GM12878 (cell line): ENCODE measurements at regions of chr6 and their contacts with region 1.

Region 1: DNA sequence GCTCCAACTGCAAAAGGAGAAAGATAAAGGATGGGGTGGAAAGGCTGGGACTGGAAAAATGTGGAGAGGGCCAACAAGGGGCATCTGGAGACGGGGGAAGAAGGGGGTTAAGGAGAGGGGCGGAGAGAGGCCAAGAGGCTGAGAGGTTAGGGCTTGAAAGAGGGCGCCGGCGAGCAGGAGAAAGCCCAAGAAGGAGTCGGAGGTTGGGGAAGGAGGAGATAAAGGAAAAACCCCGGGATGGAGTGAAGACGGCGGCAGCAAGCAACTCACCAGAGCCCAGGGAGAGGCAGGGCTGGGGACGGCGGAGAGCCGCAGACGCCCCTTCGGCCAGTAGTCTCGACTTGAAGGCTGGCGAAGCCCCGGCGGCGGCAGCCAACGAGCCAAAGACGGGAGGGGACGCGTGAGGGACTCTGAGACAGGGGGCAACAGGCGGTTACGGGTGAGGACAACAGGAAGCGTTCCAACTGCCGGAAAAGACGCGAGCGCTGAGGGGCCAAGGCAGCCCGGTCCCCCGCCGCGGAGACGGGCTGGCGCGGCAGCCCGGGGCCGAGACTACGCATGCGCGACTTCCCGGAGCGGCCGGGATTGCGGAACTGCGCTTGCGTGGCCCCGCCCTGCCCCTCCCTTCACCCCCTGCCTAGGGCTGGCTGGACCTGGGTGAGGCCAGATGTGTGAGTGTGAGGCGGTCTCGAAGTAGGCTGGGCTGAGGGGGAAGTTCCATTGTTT is at the start of gene STK38:
- DNase-seq: peak; percentile 71
- ATAC-seq: peak; percentile 94
- H3K4me3 ChIP-seq: peak within 1 kb of the TSS; percentile 97
- H3K27ac ChIP-seq: peak within 1 kb of the TSS; percentile 84
- H3K4me1 ChIP-seq: peaks cover 19% of the 10 kb centered on the region
- H3K27me3 ChIP-seq: no peaks in the 10 kb centered on the region
- CTCF ChIP-seq: peak; percentile 10 to 39 (median 35); a peak in 3 of 6 replicates
- EP300 ChIP-seq: no peak
- POLR2A ChIP-seq: peak; percentile 94
- RAD21 ChIP-seq: peak; percentile 14; the same call in 1 of the 2 replicates
- polyA plus RNA-seq, gene STK38: 4.1 to 6.6 TPM

Region 2: DNA sequence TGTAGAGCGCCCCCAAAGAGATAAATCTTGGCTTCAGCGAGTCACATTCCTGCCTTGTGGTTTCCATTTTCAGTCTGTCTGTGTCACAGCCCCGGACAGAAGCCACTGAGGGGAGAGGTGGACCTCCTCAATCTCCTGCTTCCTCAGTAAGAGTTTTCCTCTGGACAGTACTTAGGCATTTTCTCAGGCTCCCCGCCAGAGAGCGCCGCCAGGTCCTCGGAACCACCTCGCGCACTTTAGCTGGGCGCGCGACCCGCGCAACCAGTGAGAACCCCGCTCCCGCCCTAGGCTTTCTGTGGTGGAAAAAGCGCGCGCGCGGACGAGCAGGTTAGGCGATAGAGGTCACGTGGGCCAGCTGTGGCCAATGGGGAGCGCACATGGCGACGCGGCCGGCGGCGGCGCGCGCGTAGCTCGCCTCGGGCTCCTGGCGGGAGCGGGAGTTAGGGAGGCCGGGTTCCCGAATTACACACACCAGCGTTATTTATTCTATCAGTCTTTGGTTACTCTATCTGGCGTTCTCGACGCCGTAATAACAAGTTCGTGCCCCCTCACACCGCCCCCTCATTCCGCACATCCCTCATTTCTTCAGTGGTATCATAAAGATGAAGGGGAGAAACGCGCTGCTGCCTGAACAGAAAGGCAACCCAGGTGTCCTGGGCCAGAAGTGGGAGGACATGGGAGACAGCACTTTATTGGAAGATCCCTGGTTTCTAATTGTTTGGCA is 123.8 kb before region 1 on chr6:
- CTCF ChIA-PET with region 1: interaction called, 4 read pairs
- POLR2A ChIA-PET with region 1: no interaction called
- RAD21 ChIA-PET with region 1: interaction called, 12 read pairs
- SMC1A ChIA-PET with region 1: interaction called, 3 read pairs
- in situ Hi-C with region 1: no loop called
- intact Hi-C with region 1: no loop called
- DNase-seq: peak; percentile 85
- ATAC-seq: peak; percentile 98
- H3K4me3 ChIP-seq: peak overlapping the region; percentile 69
- H3K27ac ChIP-seq: peak overlapping the region; percentile 82
- H3K4me1 ChIP-seq: peaks cover 8% of the 10 kb centered on the region
- H3K27me3 ChIP-seq: no peaks in the 10 kb centered on the region
- CTCF ChIP-seq: peak; percentile 74 to 84 (median 74)
- EP300 ChIP-seq: no peak
- POLR2A ChIP-seq: peak; percentile 80
- RAD21 ChIP-seq: peak; percentile 74

Region 3: GRCh38 chr6:36559011-36559793 is 12.1 kb after region 1 on chr6:
- CTCF ChIA-PET with region 1: interaction called, 4 read pairs
- POLR2A ChIA-PET with region 1: interaction called, 11 read pairs
- RAD21 ChIA-PET with region 1: no interaction called
- SMC1A ChIA-PET with region 1: interaction called, 19 read pairs
- in situ Hi-C with region 1: no loop called
- intact Hi-C with region 1: no loop called
- DNase-seq: no peak
- ATAC-seq: peak; percentile 93
- H3K4me3 ChIP-seq: no peak overlapping the region
- H3K27ac ChIP-seq: no peak overlapping the region
- H3K4me1 ChIP-seq: no peaks in the 10 kb centered on the region
- H3K27me3 ChIP-seq: no peaks in the 10 kb centered on the region
- CTCF ChIP-seq: no peak
- EP300 ChIP-seq: 0 out of 4 replicates have a peak, but pooled peaks of 1 of the 2 experiments have one; percentile 31
- POLR2A ChIP-seq: no peak
- RAD21 ChIP-seq: no peak

Region 4: GRCh38 chr6:36576561-36576960 is 29.5 kb after region 1 on chr6:
- CTCF ChIA-PET with region 1: interaction called, 9 read pairs
- POLR2A ChIA-PET with region 1: no interaction called
- RAD21 ChIA-PET with region 1: interaction called, 5 read pairs
- SMC1A ChIA-PET with region 1: interaction called, 11 read pairs
- in situ Hi-C with region 1: no loop called
- intact Hi-C with region 1: no loop called
- DNase-seq: no peak
- ATAC-seq: no peak
- H3K4me3 ChIP-seq: no peak overlapping the region
- H3K27ac ChIP-seq: no peak overlapping the region
- H3K4me1 ChIP-seq: 0 out of 2 replicates have a peak, but pooled peaks cover 4% of the 10 kb centered on the region
- H3K27me3 ChIP-seq: no peaks in the 10 kb centered on the region
- CTCF ChIP-seq: no peak
- EP300 ChIP-seq: no peak
- POLR2A ChIP-seq: no peak
- RAD21 ChIP-seq: no peak

Region 5: GRCh38 chr6:36594029-36594815 is 47.1 kb after region 1 on chr6 and contains the start of gene SRSF3:
- CTCF ChIA-PET with region 1: interaction called, 4 read pairs
- POLR2A ChIA-PET with region 1: interaction called, 14 read pairs
- RAD21 ChIA-PET with region 1: interaction called, 7 read pairs
- SMC1A ChIA-PET with region 1: interaction called, 6 read pairs
- in situ Hi-C with region 1: no loop called
- intact Hi-C with region 1: loop called (anchors 1 kb)
- DNase-seq: peak; percentile 90
- ATAC-seq: peak; percentile 89
- H3K4me3 ChIP-seq: peak within 1 kb of the TSS; percentile 100
- H3K27ac ChIP-seq: peak within 1 kb of the TSS; percentile 87
- H3K4me1 ChIP-seq: peaks cover 11% of the 10 kb centered on the region
- H3K27me3 ChIP-seq: no peaks in the 10 kb centered on the region
- CTCF ChIP-seq: peak; percentile 20 to 43 (median 28); a peak in 3 of 6 replicates
- EP300 ChIP-seq: peak in 1 of 2 experiments; percentile 56; a peak in 2 of 4 replicates
- POLR2A ChIP-seq: peak; percentile 100
- RAD21 ChIP-seq: no peak
- polyA plus RNA-seq, gene SRSF3: 971 to 1,377 TPM

Region 6: GRCh38 chr6:36599791-36600209 is 52.7 kb after region 1 on chr6:
- CTCF ChIA-PET with region 1: interaction called, 4 read pairs
- POLR2A ChIA-PET with region 1: interaction called, 14 read pairs
- RAD21 ChIA-PET with region 1: interaction called, 4 read pairs
- SMC1A ChIA-PET with region 1: interaction called, 6 read pairs
- in situ Hi-C with region 1: no loop called
- intact Hi-C with region 1: loop called (anchors 1 kb)
- DNase-seq: no peak
- ATAC-seq: peak; percentile 84
- H3K4me3 ChIP-seq: peak overlapping the region; percentile 73
- H3K27ac ChIP-seq: no peak overlapping the region
- H3K4me1 ChIP-seq: peaks cover 3% of the 10 kb centered on the region; the same call in 1 of the 2 replicates
- H3K27me3 ChIP-seq: no peaks in the 10 kb centered on the region
- CTCF ChIP-seq: no peak
- EP300 ChIP-seq: no peak
- POLR2A ChIP-seq: peak; percentile 66
- RAD21 ChIP-seq: no peak